Psoas muscle (tissue), 8 donors: ENCODE measurements at regions of chr2 and their contacts with region 1.

Region 1: GRCh38 chr2:28566521-28567041 is 70.7 kb downstream of the PLB1 start:
- DNase-seq: peak; percentile 86 to 92
- ATAC-seq: peak; percentile 87 to 97 (median 90)
- H3K4me3 ChIP-seq: peak overlapping the region; percentile 70
- H3K27ac ChIP-seq: peak overlapping the region; percentile 83
- H3K4me1 ChIP-seq: peaks cover 21% of the 10 kb centered on the region
- H3K27me3 ChIP-seq: no peaks in the 10 kb centered on the region
- CTCF ChIP-seq: peak; percentile 99

Region 2: DNA sequence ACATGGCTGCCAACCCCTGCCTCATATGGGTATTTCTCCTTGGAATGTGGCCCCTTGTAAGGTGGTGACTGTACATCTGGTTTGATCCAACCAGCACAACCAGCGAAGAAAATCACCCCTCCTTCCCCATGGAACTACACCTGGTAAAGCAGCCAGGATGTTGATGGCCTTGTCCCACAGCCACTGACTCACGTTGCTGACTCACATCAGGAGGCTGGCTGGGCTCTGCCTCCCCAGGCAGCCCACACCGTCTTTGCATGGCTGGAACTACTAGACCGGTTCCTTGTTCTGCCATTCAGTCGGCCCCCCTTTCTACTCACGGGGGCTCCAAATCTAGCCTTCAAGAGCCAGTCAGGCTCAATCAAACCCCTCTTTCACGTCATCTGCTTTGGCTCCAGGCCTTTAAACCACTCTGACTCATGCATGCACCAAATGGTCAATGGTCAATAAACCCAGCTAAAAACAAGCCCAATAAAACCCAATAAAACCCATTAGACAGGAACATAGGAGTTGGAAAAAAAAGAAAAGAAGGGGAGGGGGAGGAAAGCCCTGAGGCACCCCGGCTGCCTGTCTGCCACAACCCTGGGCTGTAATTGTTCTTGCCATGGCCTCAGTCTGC is 44.1 kb after region 1 on chr2:
- intact Hi-C with region 1: loop called (anchors 2 to 5 kb)
- DNase-seq: peak; percentile 64 to 83
- ATAC-seq: peak; percentile 66 to 77 (median 72)
- H3K4me3 ChIP-seq: peak overlapping the region; percentile 5
- H3K27ac ChIP-seq: peak overlapping the region; percentile 84
- H3K4me1 ChIP-seq: peaks cover 68% of the 10 kb centered on the region
- H3K27me3 ChIP-seq: no peaks in the 10 kb centered on the region
- CTCF ChIP-seq: no peak

Region 3: GRCh38 chr2:28764909-28765711 is 198.5 kb after region 1 on chr2:
- intact Hi-C with region 1: loop called in 1 of 2 experiments (anchors 5 kb)
- DNase-seq: no peak
- ATAC-seq: peak in 1 of 4 donors; percentile 6
- H3K4me3 ChIP-seq: no peak overlapping the region
- H3K27ac ChIP-seq: peak overlapping the region; percentile 4
- H3K4me1 ChIP-seq: peaks cover 76% of the 10 kb centered on the region
- H3K27me3 ChIP-seq: no peaks in the 10 kb centered on the region
- CTCF ChIP-seq: no peak